ENCODE measurements at regions of chr3 and their contacts with region 1.

Region 1: GRCh38 chr3:195894780-195895607 is 13.4 kb downstream of the TNK2 start:
- DNase-seq: peak; percentile 62 to 87 (median 68)
- ATAC-seq: peak; percentile 83
- H3K4me3 ChIP-seq: peak overlapping the region; percentile 59
- H3K27ac ChIP-seq: peak overlapping the region; percentile 42
- H3K4me1 ChIP-seq: peaks cover 22 to 64% of the 10 kb centered on the region in 2 experiments
- H3K27me3 ChIP-seq: no peaks in the 10 kb centered on the region
- CTCF ChIP-seq: peak; percentile 94 to 96 (median 94)
- EP300 ChIP-seq: no peak
- POLR2A ChIP-seq: no peak
- RAD21 ChIP-seq: peak; percentile 89 to 90; a peak in 3 of 4 replicates

Region 2: GRCh38 chr3:195512798-195513345 is 382.1 kb before region 1 on chr3:
- CTCF ChIA-PET with region 1: no interaction called
- POLR2A ChIA-PET with region 1: no interaction called
- in situ Hi-C with region 1: no loop called
- intact Hi-C with region 1: no loop called
- DNase-seq: no peak
- ATAC-seq: no peak
- H3K4me3 ChIP-seq: no peak overlapping the region
- H3K27ac ChIP-seq: no peak overlapping the region
- H3K4me1 ChIP-seq: no peaks in the 10 kb centered on the region
- H3K27me3 ChIP-seq: no peaks in the 10 kb centered on the region
- CTCF ChIP-seq: no peak
- EP300 ChIP-seq: no peak
- POLR2A ChIP-seq: no peak
- RAD21 ChIP-seq: no peak

Region 3: DNA sequence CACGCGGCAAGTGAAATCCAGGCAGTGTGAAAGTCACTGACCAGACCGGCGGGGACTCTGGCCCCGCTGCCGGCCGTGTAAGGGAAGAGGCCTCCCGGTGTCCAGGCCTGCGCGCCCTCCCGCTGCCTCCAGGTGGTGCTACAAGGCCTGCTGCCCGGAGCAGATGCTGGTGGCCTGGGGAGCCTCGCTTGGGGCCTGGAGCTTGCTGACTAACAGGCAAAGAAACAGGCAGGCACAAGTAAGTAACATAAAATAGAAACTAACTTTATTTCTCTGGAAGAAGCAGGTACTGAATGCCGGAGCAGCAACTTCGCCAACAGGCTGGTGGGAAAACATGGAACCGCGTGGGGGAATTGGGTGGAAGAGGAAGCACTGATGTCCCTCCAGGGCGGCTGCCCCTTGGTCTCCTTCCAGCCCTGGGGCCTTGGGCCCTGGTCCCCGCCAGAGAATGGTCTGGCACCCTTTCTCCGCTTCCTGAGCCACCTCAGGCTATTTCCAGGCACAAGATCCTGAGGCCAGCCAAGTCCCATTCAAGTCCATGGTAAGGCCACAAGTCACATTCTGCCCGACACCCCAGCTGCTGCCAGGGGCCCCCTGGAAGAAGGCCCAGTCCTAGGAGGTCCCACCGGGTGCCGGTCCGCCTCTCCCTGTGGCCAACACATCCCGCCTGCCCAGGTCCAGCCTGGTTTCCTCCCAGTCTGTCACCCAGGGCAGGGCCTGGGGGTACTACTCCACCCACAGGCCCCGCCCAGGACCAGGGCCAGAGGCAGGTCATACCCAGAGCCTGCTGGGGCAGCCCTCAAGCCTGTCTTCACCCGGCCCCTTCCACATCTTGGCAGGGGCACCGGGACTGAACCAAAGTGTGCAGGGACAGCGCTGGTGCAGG is 31.6 kb before region 1 on chr3:
- CTCF ChIA-PET with region 1: interaction called, 59 read pairs
- POLR2A ChIA-PET with region 1: interaction called, 5 read pairs
- in situ Hi-C with region 1: loop called (anchors 5 kb)
- intact Hi-C with region 1: loop called (anchors 1 kb)
- DNase-seq: peak; percentile 85 to 91 (median 86)
- ATAC-seq: peak; percentile 99
- H3K4me3 ChIP-seq: no peak overlapping the region
- H3K27ac ChIP-seq: no peak overlapping the region
- H3K4me1 ChIP-seq: peaks cover 7 to 35% of the 10 kb centered on the region in 2 experiments; a peak in 3 of 5 replicates
- H3K27me3 ChIP-seq: no peaks in the 10 kb centered on the region
- CTCF ChIP-seq: peak; percentile 96 to 98 (median 97)
- EP300 ChIP-seq: no peak
- POLR2A ChIP-seq: no peak
- RAD21 ChIP-seq: peak; percentile 94 to 98

Region 4: DNA sequence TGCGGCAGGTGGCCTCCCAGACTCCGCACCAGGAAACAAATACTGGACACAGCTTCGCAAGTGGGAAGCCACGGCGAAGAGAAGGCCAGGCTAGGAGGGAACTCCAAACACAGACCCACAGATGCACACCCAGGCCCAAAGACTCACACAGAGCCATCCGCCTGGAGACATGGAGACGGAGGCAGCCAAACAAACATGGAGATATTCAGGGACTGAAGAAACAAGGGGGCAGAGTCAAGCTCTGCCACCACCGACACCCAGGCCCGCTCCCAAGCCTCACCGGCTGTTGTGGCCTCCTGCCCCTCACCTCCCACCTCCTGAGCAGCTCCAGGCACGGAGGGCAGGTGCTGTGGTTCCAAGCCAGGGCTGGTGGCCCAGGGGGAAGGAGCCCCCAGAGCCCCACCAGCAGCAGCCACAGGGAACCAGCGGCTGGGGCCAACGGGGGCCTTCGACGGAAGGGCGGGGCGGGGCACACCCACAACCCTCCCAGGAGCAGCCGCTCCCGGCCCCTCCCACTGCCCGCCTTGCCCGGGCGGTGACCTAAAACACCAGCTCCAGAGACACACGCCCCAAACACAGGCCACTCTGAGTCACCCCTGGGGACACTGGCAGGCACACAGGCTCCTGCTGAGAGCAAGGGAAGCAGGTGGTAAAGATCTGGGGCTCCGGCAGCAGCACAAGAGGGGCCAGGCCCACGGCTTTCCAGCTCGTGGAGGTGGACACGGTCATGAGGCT is 18.5 kb before region 1 on chr3:
- CTCF ChIA-PET with region 1: interaction called, 3 read pairs
- POLR2A ChIA-PET with region 1: interaction called, 10 read pairs
- in situ Hi-C with region 1: no loop called
- intact Hi-C with region 1: no loop called
- DNase-seq: peak; percentile 95 to 98 (median 96)
- ATAC-seq: peak; percentile 99
- H3K4me3 ChIP-seq: peak overlapping the region; percentile 25; the same call in 1 of the 2 replicates
- H3K27ac ChIP-seq: peak overlapping the region; percentile 76
- H3K4me1 ChIP-seq: peaks cover 14 to 57% of the 10 kb centered on the region in 2 experiments
- H3K27me3 ChIP-seq: no peaks in the 10 kb centered on the region
- CTCF ChIP-seq: no peak
- EP300 ChIP-seq: no peak
- POLR2A ChIP-seq: peak; percentile 54; the same call in 1 of the 2 replicates
- RAD21 ChIP-seq: no peak

Region 5: GRCh38 chr3:195909644-195910508 is 14.9 kb after region 1 on chr3:
- CTCF ChIA-PET with region 1: interaction called, 6 read pairs
- POLR2A ChIA-PET with region 1: interaction called, 6 read pairs
- in situ Hi-C with region 1: no loop called
- intact Hi-C with region 1: loop called (anchors 1 kb)
- DNase-seq: peak; percentile 94 to 100 (median 100)
- ATAC-seq: peak; percentile 88
- H3K4me3 ChIP-seq: peak overlapping the region; percentile 40
- H3K27ac ChIP-seq: peak overlapping the region; percentile 74
- H3K4me1 ChIP-seq: peaks cover 43 to 48% of the 10 kb centered on the region in 2 experiments
- H3K27me3 ChIP-seq: no peaks in the 10 kb centered on the region
- CTCF ChIP-seq: no peak
- EP300 ChIP-seq: no peak
- POLR2A ChIP-seq: peak; percentile 81
- RAD21 ChIP-seq: no peak

Region 6: GRCh38 chr3:196136026-196136984 is 241.3 kb after region 1 on chr3:
- CTCF ChIA-PET with region 1: no interaction called
- POLR2A ChIA-PET with region 1: no interaction called
- in situ Hi-C with region 1: no loop called
- intact Hi-C with region 1: no loop called
- DNase-seq: no peak
- ATAC-seq: peak; percentile 2; the same call in 1 of the 3 replicates
- H3K4me3 ChIP-seq: no peak overlapping the region
- H3K27ac ChIP-seq: peak overlapping the region; percentile 8; the same call in 1 of the 3 replicates
- H3K4me1 ChIP-seq: peaks cover 31 to 32% of the 10 kb centered on the region in 2 experiments
- H3K27me3 ChIP-seq: no peaks in the 10 kb centered on the region
- CTCF ChIP-seq: no peak
- EP300 ChIP-seq: no peak
- POLR2A ChIP-seq: no peak
- RAD21 ChIP-seq: no peak

Region 7: GRCh38 chr3:196502775-196503195 is 607.8 kb after region 1 on chr3:
- CTCF ChIA-PET with region 1: no interaction called
- POLR2A ChIA-PET with region 1: no interaction called
- in situ Hi-C with region 1: loop called (anchors 25 kb)
- intact Hi-C with region 1: no loop called
- DNase-seq: peak; percentile 20 to 62 (median 26)
- ATAC-seq: peak; percentile 33
- H3K4me3 ChIP-seq: peak overlapping the region; percentile 91
- H3K27ac ChIP-seq: peak overlapping the region; percentile 93
- H3K4me1 ChIP-seq: peaks cover 10 to 14% of the 10 kb centered on the region in 2 experiments; a peak in 4 of 5 replicates
- H3K27me3 ChIP-seq: no peaks in the 10 kb centered on the region
- CTCF ChIP-seq: 0 out of 6 replicates have a peak, but pooled peaks of 1 of the 3 experiments have one; percentile 23
- EP300 ChIP-seq: no peak
- POLR2A ChIP-seq: no peak
- RAD21 ChIP-seq: no peak

Measured in K562 (cell line).